Spleen (tissue), 13 donors: ENCODE measurements at regions of chr20 and their contacts with region 1.

Region 1: DNA sequence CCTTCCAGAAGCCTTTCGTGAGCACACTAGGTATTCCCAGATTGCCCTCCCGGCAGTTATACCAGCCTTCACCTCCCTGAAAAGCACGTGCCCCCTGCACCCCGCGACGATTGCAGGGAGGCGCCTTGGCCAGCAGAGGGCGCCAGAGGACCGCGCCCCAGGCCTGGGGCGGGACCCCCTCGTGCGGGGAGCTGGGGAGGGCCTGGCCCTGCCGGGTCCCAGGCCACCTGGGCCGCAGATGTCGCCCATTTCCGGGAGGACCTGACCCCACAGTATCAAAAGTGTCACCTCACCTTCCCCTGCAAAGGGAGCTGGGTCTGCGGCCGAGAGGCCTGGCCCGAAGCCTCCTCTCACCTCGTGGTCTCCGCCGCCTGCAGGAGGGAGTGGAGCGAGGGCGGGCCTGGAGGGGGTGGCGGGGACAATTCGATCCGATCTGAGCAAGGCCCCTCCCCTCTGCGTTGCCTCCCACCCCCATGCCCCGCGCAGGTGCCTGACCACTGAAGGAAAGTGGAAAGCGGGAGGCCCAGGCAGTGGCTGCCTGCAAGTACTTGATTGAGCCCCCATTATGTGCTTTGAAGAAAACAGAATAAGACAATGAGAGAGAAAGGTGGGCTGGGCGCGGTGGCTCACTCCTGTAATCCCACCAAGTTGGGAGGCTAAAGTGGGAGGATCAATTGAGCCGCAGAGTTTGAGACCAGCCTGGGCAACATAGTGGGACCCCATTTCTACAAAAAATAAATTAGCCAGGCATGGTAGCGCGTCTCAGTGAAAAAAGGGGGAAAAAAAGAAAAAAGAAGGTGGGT is 3.5 kb upstream of the SNAI1 start:
- DNase-seq: peak; percentile 91
- H3K4me3 ChIP-seq: peak overlapping the region in 4 of 8 donors; percentile 4 to 57 (median 19)
- H3K27ac ChIP-seq: no peak overlapping the region
- H3K4me1 ChIP-seq: peaks cover 0 to 52% (median 33%) of the 10 kb centered on the region in 6 donors
- H3K27me3 ChIP-seq: peaks cover 0 to 17% (median 0%) of the 10 kb centered on the region in 7 donors
- CTCF ChIP-seq: peak; percentile 94 to 100 (median 99)
- POLR2A ChIP-seq: no peak

Region 2: GRCh38 chr20:50070991-50071888 is 92.0 kb after region 1 on chr20:
- intact Hi-C with region 1: loop called (anchors 2 kb)
- DNase-seq: peak; percentile 99
- H3K4me3 ChIP-seq: peak overlapping the region in 6 of 8 donors; percentile 19 to 52 (median 24)
- H3K27ac ChIP-seq: peak overlapping the region in 3 of 8 donors; percentile 11 to 46 (median 34)
- H3K4me1 ChIP-seq: peaks cover 0 to 29% (median 17%) of the 10 kb centered on the region in 6 donors
- H3K27me3 ChIP-seq: no peaks in the 10 kb centered on the region
- CTCF ChIP-seq: peak; percentile 100
- POLR2A ChIP-seq: no peak

Region 3: DNA sequence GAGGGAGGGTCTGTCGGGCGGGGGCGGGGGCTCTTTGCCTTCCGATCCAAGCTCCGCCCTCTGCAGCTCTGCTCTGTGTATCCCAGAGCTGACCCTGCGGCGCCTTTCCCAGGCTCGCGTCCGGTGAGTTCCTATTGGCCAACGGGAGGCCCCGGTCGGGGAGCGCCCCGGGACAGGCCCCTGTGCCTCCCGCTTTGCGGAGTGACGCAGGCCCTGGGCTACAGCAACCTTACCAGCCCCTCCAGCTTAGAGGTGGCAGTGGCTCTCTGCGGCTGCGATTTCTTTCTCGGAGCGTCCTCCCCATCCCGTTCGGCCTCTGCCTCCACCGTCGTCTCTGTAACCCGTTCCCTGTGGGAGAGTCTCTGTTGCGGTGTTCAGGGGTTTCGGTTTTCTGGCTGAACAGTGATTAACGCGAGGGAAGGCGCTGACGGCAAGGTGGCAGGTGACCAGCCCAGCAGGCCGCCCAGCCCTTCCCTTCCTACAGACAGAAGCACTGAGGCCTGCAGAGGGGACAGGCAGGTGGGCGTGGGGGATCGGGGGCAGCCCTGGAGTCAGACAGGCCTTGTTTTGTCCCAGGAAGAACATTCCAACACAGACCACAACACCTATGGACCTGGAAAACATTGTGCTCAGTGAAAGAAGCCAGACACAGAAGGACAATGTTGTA is 193.2 kb after region 1 on chr20:
- intact Hi-C with region 1: loop called (anchors 10 kb)
- DNase-seq: peak; percentile 87
- H3K4me3 ChIP-seq: peak overlapping the region; percentile 1 to 68 (median 36)
- H3K27ac ChIP-seq: peak overlapping the region in 7 of 8 donors; percentile 49 to 77 (median 67)
- H3K4me1 ChIP-seq: peaks cover 0 to 29% (median 17%) of the 10 kb centered on the region in 6 donors
- H3K27me3 ChIP-seq: peaks cover 0 to 19% (median 0%) of the 10 kb centered on the region in 7 donors
- CTCF ChIP-seq: no peak
- POLR2A ChIP-seq: peak in 1 of 3 donors; percentile 14